GM10248 (cell line): ENCODE measurements at regions of chr5 and their contacts with region 1.

Region 1: GRCh38 chr5:131417240-131417869 is 153.5 kb downstream of the CDC42SE2 start:
- DNase-seq: peak; percentile 63
- CTCF ChIP-seq: peak; percentile 66

Region 2: GRCh38 chr5:131109540-131110255 is 307.7 kb before region 1 on chr5:
- CTCF ChIA-PET with region 1: no interaction called
- POLR2A ChIA-PET with region 1: no interaction called
- DNase-seq: peak; percentile 53
- CTCF ChIP-seq: peak; percentile 79

Region 3: GRCh38 chr5:131406975-131407638 is 10.2 kb before region 1 on chr5:
- CTCF ChIA-PET with region 1: interaction called, 13 read pairs
- POLR2A ChIA-PET with region 1: no interaction called
- DNase-seq: no peak
- CTCF ChIP-seq: no peak

Region 4: GRCh38 chr5:131430794-131431193 is 13.4 kb after region 1 on chr5:
- CTCF ChIA-PET with region 1: interaction called, 27 read pairs
- POLR2A ChIA-PET with region 1: no interaction called
- DNase-seq: no peak
- CTCF ChIP-seq: no peak

Region 5: DNA sequence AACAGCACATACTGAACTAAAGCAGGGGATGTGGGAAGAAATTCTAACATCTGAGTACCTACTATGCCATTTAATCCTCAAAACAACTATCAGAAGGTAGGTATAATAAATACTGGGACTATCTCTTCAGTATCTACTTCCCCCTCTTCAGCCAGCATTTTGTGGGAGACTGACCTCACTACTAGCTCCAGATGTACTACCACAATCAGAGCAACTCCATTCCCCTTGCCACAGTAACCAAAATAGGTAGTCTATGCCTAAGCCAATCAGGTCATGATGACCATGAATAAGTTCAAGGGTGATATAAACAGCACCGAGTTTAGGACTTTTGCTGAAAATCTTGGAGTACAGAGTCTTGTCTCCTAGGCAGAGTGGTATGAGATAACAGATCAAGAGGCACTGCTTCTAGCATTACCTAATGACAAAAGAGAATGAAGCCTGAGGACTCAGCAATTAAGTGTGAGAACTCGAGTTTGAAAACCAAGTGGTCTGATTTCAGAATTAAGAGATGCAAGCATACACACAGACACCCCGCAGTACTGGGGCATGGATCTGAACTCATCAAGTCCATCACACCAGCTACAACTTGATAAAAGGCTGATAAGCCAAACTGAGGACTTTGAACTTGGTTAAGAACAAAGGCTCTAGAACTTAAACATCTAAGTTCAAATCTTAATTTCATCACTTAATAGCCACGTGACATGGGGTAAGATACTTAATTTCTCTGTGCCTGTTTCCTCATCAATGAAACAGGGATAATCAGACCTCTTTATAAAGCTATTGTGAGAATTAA is 369.7 kb after region 1 on chr5:
- CTCF ChIA-PET with region 1: no interaction called
- POLR2A ChIA-PET with region 1: no interaction called
- DNase-seq: no peak
- CTCF ChIP-seq: no peak